ENCODE measurements at regions of chr4 and their contacts with region 1.

Region 1: GRCh38 chr4:156347412-156348075 is 393.9 kb upstream of the CTSO start:
- DNase-seq: no peak
- H3K4me3 ChIP-seq: no peak overlapping the region
- CTCF ChIP-seq: no peak
- POLR2A ChIP-seq: no peak

Region 2: GRCh38 chr4:154634058-154634457 is 1713.5 kb before region 1 on chr4:
- intact Hi-C with region 1: no loop called
- DNase-seq: no peak
- H3K4me3 ChIP-seq: no peak overlapping the region
- CTCF ChIP-seq: no peak
- POLR2A ChIP-seq: no peak

Region 3: DNA sequence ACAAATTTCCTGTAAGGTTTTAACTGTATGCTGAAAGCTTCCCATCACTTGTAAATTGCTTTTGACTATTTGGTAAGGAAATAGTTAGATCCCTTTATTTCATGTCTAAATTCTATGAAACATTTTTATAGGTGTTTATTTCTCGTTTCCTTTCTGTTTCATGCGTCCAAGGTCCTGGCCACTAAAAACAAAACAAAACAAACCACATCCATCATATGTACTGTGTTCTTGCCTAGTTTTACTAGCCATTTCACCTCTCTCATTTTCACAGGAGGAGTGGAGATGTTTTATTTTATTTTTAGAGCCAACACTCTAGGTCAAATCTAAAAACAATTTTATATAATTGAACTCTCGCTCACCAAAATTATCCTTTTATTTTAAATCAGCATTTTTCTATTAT is 18.7 kb before region 1 on chr4:
- intact Hi-C with region 1: loop called (anchors 1 kb)
- DNase-seq: no peak
- H3K4me3 ChIP-seq: no peak overlapping the region
- CTCF ChIP-seq: no peak
- POLR2A ChIP-seq: no peak

Region 4: DNA sequence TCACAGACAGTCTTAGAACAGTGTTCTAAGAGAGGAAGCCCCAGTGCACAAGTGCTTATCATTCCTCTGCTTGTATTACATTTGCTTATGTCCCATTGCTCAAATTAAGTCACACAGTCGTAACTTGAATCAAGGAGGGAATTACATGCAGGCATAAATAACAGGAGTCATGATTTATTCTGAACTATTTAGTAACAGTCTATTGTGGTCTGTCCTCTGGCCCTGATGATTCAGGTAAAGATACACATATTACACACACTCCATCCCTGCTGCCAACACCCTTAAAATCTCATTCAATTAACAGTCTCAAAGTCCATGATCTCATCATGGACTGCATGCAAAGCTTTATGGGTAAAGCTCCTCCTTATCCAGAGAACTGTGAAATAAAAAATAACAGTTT is 933.1 kb after region 1 on chr4:
- intact Hi-C with region 1: no loop called
- DNase-seq: no peak
- H3K4me3 ChIP-seq: no peak overlapping the region
- CTCF ChIP-seq: no peak
- POLR2A ChIP-seq: no peak